Activated B cell treated with CpG ODN at 0.5 μM for 24 hours (primary cell): ENCODE measurements at regions of chr6 and their contacts with region 1.

Region 1: GRCh38 chr6:155314092-155314772 is at the start of gene TFB1M:
- DNase-seq: peak; percentile 90
- ATAC-seq: peak; percentile 94
- H3K4me3 Mint-ChIP-seq: peak within 1 kb of the TSS; percentile 97
- H3K27ac Mint-ChIP-seq: peak within 1 kb of the TSS; percentile 93
- H3K4me1 Mint-ChIP-seq: peaks cover 28% of the 10 kb centered on the region
- H3K27me3 Mint-ChIP-seq: no peaks in the 10 kb centered on the region
- CTCF ChIP-seq: no peak
- total RNA-seq, gene TFB1M: 35.2 and 41.5 TPM in 2 replicates

Region 2: GRCh38 chr6:154814063-154814462 is 500.2 kb before region 1 on chr6:
- CTCF ChIA-PET with region 1: no interaction called
- POLR2A ChIA-PET with region 1: no interaction called
- intact Hi-C with region 1: loop called (anchors 5 kb)
- DNase-seq: no peak
- ATAC-seq: peak; percentile 39
- H3K4me3 Mint-ChIP-seq: peak overlapping the region; percentile 13
- H3K27ac Mint-ChIP-seq: peak overlapping the region; percentile 64
- H3K4me1 Mint-ChIP-seq: peaks cover 45% of the 10 kb centered on the region
- H3K27me3 Mint-ChIP-seq: no peaks in the 10 kb centered on the region
- CTCF ChIP-seq: no peak

Region 3: DNA sequence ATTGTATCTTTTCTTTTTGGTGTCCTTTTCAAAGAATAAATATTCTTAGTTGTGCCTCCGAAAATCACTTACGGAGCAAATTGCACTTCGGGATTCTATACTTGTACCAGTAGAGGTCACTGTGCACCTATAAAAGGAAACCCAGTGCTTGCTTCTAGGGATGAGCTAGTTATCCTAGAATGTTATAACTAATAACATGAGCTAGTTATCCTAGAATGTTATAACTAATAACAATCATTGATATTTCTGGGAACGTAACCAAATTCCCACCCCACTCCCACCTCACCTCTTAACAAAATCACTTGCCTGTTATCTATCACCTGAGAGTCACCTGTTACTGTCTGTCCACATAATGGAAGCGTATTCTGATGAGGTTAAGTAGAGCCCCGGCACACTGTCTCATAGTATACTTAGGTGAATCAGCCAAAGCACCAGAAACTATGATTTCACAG is 446.1 kb before region 1 on chr6:
- CTCF ChIA-PET with region 1: no interaction called
- POLR2A ChIA-PET with region 1: no interaction called
- intact Hi-C with region 1: loop called (anchors 2 kb)
- DNase-seq: no peak
- ATAC-seq: peak; percentile 28
- H3K4me3 Mint-ChIP-seq: no peak overlapping the region
- H3K27ac Mint-ChIP-seq: no peak overlapping the region
- H3K4me1 Mint-ChIP-seq: no peaks in the 10 kb centered on the region
- H3K27me3 Mint-ChIP-seq: no peaks in the 10 kb centered on the region
- CTCF ChIP-seq: peak; percentile 86

Region 4: DNA sequence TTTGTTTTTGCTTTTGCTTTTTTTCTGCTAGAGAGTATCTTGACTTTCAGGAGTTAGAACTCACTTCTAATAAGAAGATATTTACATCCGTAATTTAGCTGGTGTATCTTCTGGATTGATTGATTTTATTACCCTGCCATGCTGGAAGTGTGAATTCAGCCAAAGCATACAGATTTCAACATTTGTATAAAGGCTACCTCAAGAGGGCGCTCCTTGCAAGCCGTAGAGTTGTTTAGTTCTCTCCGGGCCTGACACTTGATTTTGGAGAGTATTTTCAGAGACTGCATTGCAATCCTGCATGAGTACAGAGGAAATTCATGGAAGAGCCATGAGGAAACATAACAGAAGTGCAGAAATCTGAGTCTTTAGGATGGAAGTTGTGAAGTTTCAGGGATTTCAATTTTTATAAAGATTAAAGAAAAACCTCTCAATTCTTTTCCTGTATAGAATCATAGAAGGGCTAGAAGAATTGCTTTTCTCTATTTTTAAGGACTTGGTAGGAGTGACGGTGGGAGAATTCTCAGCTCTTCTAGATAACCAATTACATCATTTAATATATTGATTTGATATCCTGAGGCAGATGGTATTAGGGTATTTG is 385.8 kb before region 1 on chr6:
- CTCF ChIA-PET with region 1: interaction called, 4 read pairs
- POLR2A ChIA-PET with region 1: no interaction called
- intact Hi-C with region 1: loop called (anchors 10 kb)
- DNase-seq: no peak
- ATAC-seq: no peak
- H3K4me3 Mint-ChIP-seq: no peak overlapping the region
- H3K27ac Mint-ChIP-seq: no peak overlapping the region
- H3K4me1 Mint-ChIP-seq: peaks cover 19% of the 10 kb centered on the region
- H3K27me3 Mint-ChIP-seq: no peaks in the 10 kb centered on the region
- CTCF ChIP-seq: no peak

Region 5: GRCh38 chr6:155181498-155181897 is 132.7 kb before region 1 on chr6:
- CTCF ChIA-PET with region 1: interaction called, 9 read pairs
- POLR2A ChIA-PET with region 1: interaction called, 6 read pairs
- intact Hi-C with region 1: loop called (anchors 1 kb)
- DNase-seq: no peak
- ATAC-seq: peak; percentile 67
- H3K4me3 Mint-ChIP-seq: peak overlapping the region; percentile 12
- H3K27ac Mint-ChIP-seq: peak overlapping the region; percentile 88
- H3K4me1 Mint-ChIP-seq: peaks cover 62% of the 10 kb centered on the region
- H3K27me3 Mint-ChIP-seq: no peaks in the 10 kb centered on the region
- CTCF ChIP-seq: no peak

Region 6: GRCh38 chr6:155265843-155266535 is 48.2 kb before region 1 on chr6:
- CTCF ChIA-PET with region 1: no interaction called
- POLR2A ChIA-PET with region 1: interaction called, 12 read pairs
- intact Hi-C with region 1: no loop called
- DNase-seq: no peak
- ATAC-seq: no peak
- H3K4me3 Mint-ChIP-seq: no peak overlapping the region
- H3K27ac Mint-ChIP-seq: no peak overlapping the region
- H3K4me1 Mint-ChIP-seq: peaks cover 14% of the 10 kb centered on the region
- H3K27me3 Mint-ChIP-seq: no peaks in the 10 kb centered on the region
- CTCF ChIP-seq: no peak

Region 7: DNA sequence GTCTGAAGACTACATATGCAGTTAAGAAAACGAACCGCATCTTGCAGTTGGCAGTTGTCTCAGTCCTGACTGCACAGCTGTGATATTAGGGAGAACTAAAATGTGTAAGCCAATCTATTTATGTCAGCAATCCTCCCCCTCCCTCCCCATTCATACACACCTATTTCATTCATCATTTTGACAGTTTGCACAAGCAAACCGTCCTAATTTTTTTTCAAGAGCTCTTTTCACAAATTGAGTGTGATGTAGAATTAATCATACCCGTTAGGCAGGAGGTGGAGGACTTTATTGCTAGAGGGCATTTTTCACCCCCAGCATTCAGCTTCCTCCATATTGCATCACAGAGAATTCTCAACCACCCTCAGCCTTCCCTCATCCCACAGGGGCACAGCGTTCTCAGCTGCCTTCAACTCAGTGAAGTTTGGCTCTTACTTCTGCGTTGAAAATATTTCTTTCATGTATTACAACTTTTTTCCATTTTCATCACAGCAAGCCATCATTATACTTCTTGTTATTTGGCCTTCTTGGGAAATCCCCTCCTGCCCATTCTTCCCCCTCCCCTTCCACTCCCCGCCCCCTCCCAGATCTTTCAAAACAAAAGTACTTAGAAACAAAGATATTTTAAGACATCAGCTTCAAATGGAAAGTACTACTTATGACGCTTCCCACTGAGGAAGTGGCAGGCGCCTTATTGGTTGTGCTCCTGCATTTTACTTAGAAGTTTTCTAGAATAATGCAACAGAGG is 104.0 kb after region 1 on chr6:
- CTCF ChIA-PET with region 1: no interaction called
- POLR2A ChIA-PET with region 1: interaction called, 3 read pairs
- intact Hi-C with region 1: loop called (anchors 1 kb)
- DNase-seq: no peak
- ATAC-seq: peak; percentile 81
- H3K4me3 Mint-ChIP-seq: peak overlapping the region; percentile 82
- H3K27ac Mint-ChIP-seq: peak overlapping the region; percentile 95
- H3K4me1 Mint-ChIP-seq: peaks cover 50% of the 10 kb centered on the region
- H3K27me3 Mint-ChIP-seq: no peaks in the 10 kb centered on the region
- CTCF ChIP-seq: no peak